ENCODE measurements at regions of chr12 and their contacts with region 1.

Region 1: DNA sequence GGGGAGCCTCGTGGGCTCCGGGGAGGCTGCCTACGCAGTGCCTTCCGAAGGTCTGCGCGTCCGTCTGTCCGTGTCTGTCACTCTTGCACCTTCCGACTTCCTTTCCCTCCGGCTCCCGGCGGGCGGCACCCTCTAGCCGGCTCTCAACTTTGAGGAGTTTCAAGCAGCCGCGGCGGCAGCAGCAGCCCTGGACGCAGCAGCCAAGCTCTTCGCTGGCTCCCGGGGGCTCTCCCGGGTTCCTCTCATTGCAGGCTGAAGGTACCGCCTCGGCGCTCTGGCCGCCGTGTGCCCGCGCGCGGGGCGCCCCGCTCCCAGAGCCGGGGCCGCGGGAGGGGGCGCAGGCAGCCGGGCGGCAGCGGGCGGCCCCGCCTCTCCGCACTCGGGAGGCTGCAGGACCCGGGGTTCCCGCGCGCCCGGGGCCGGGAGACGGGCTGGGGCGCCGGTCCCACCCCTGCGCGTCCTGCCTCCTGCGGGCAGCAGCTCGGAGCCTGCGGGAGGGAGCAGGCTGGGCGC is at the starts of genes AMIGO2 and PCED1B:
- DNase-seq: peak; percentile 38
- H3K4me3 ChIP-seq: peak within 1 kb of the TSS; percentile 50
- H3K27ac ChIP-seq: no peak within 1 kb of the TSS
- H3K4me1 ChIP-seq: no peaks in the 10 kb centered on the region
- CTCF ChIP-seq: peak; percentile 43
- total RNA-seq, gene AMIGO2: not detected in 2 replicates
- total RNA-seq, gene PCED1B: 8.4 TPM in 2 replicates

Region 2: GRCh38 chr12:47032644-47033043 is 46.9 kb before region 1 on chr12:
- CTCF ChIA-PET with region 1: no interaction called
- POLR2A ChIA-PET with region 1: no interaction called
- intact Hi-C with region 1: loop called (anchors 5 kb)
- DNase-seq: peak; percentile 60
- H3K4me3 ChIP-seq: no peak overlapping the region
- H3K27ac ChIP-seq: no peak overlapping the region
- H3K4me1 ChIP-seq: no peaks in the 10 kb centered on the region
- CTCF ChIP-seq: peak; percentile 84

Region 3: DNA sequence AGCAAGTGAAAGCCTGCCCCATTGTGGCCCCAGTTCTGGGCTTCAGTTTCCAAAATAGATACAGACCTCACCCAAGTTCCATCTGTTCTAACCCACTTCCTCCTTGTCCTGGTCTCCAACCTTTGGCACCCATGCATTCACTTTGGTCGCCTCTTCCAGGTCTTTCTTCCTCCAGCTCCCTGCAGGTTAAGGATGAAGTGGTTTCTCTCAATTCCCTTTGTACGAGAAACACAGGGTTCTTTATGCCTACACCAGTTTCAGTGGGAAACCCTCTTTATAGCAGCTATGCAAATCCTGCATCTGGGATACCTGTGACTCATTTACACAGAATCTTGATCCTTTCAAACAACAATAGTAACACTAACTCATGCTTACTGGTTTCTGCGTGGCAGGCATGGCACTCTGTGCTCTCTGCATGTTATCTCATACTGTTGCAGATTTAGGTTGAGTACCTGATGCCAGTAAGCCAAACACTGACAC is 110.8 kb after region 1 on chr12:
- CTCF ChIA-PET with region 1: no interaction called
- POLR2A ChIA-PET with region 1: no interaction called
- intact Hi-C with region 1: loop called (anchors 5 kb)
- DNase-seq: no peak
- H3K4me3 ChIP-seq: no peak overlapping the region
- H3K27ac ChIP-seq: no peak overlapping the region
- H3K4me1 ChIP-seq: peaks cover 60% of the 10 kb centered on the region
- CTCF ChIP-seq: no peak

Region 4: DNA sequence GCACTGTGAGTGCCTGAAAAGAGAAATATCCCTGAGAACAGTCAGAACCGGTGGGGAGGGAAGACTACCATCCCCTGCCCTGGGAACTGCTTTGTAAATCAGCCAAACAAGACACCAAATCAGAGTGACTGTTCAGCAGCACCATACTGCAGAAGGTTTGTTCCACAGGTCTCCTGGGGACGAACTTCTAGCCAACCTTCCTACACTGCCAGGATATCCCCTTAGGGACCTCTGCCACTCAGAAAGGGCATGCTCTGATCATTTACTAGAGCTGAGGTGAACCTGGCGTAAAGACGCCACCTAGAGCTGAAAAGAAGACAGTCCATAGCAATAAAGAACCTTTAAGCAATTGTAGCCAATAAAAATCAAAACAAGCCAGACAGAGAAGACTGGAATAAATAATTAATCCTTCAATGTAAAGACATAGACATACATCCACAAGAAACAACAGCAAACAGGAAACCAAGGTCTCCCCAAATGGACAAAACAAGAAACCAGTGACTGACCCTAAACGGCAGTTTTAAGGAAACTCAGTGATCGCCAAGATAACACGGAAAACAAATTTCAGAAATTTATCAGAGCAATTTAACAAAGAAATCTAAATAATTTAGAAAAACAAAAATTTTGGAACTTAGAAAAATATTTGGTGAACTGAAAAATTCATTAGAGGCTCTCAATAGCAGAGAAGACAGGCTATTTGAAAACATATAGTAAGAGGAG is 228.3 kb after region 1 on chr12:
- CTCF ChIA-PET with region 1: no interaction called
- POLR2A ChIA-PET with region 1: no interaction called
- intact Hi-C with region 1: loop called (anchors 1 kb)
- DNase-seq: peak; percentile 76
- H3K4me3 ChIP-seq: no peak overlapping the region
- H3K27ac ChIP-seq: no peak overlapping the region
- H3K4me1 ChIP-seq: peaks cover 15% of the 10 kb centered on the region
- CTCF ChIP-seq: peak; percentile 96

Region 5: GRCh38 chr12:47409310-47409709 is 329.8 kb after region 1 on chr12:
- CTCF ChIA-PET with region 1: no interaction called
- POLR2A ChIA-PET with region 1: no interaction called
- intact Hi-C with region 1: loop called (anchors 1 kb)
- DNase-seq: no peak
- H3K4me3 ChIP-seq: no peak overlapping the region
- H3K27ac ChIP-seq: no peak overlapping the region
- H3K4me1 ChIP-seq: peaks cover 10% of the 10 kb centered on the region
- CTCF ChIP-seq: no peak

Measured in OCI-LY7 (cell line).